ENCODE measurements at regions of chr3 and their contacts with region 1.

Region 1: DNA sequence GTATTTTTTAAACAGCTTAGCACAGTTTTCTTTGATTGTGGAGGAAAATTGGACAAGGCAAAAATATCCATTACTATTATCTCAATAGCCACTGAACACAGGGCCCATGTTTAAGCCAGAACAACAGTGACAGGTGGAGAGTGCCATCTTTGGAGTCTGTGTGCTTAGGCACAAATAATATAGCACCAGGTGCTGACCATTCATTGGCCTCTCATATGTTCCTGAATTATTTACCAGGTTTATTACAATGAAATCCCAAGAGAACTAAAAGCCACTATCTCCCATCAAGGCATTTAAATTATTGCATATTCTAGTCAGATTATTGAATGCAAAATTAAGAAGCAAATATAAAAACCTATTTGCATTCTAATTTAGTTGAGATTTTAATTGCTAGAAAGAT is 39.6 kb downstream of the GPR156 start:
- DNase-seq: no peak
- CTCF ChIP-seq: no peak

Region 2: GRCh38 chr3:120417272-120417911 is 172.0 kb after region 1 on chr3:
- in situ Hi-C with region 1: loop called (anchors 10 kb)
- DNase-seq: peak; percentile 89
- CTCF ChIP-seq: peak; percentile 83

Region 3: DNA sequence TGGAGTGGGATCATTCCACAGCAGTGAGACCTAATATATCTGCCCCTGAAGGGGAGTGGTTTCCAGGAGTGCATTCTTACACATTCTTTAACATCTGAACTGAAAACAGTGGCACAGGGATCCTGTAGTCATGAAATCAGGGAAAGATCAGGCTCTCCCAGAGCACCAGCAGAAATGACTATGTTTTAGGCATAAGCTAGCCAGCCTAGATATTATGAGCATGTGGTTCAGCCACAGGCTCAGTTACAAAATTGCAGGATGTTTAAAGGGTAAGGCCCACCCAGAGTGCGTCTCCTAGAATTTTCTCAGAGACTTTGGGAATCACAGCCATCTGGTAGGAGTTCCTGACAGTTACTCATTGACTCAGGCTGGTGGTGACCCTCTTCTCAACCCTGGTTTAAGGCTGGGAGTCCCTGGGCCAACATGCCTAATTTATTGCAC is 184.6 kb after region 1 on chr3:
- in situ Hi-C with region 1: no loop called
- DNase-seq: no peak
- CTCF ChIP-seq: no peak

Measured in GM13976 (cell line).